MCF 10A (cell line): ENCODE measurements at regions of chr6 and their contacts with region 1.

Region 1: DNA sequence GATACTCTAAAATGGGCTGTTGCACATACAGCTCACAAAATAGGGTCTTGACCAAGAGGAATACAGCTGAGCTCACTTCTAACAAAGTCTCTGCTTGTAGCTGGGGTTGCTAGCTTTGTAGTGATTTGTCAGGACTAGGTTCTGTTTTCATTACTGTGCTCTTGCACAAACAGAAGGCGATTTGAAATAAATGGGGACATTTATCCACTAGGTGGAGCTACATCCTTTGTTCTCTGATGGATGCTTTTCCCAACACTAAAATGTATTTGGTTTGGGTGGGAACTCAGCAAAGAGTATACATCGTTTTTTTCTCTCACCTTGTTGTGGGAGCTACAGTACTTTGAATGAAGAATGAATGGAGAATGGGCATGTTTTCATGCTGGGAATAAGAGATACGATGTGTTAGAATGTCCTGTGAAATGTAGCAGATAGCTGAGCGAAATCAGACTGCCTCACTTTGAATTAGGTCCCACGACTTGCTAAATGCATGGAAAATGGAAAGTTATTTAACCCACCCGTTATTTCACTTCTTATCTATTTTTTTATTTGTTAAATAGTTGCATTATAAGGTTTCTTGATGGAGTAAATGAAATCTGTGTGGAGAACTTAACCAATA is 494.7 kb upstream of the MAP3K7 start:
- DNase-seq: peak; percentile 61
- H3K4me3 Mint-ChIP-seq: no peak overlapping the region
- H3K27ac Mint-ChIP-seq: no peak overlapping the region
- H3K4me1 Mint-ChIP-seq: peaks cover 5% of the 10 kb centered on the region
- H3K27me3 Mint-ChIP-seq: peaks cover 17% of the 10 kb centered on the region
- CTCF ChIP-seq: peak; percentile 72

Region 2: DNA sequence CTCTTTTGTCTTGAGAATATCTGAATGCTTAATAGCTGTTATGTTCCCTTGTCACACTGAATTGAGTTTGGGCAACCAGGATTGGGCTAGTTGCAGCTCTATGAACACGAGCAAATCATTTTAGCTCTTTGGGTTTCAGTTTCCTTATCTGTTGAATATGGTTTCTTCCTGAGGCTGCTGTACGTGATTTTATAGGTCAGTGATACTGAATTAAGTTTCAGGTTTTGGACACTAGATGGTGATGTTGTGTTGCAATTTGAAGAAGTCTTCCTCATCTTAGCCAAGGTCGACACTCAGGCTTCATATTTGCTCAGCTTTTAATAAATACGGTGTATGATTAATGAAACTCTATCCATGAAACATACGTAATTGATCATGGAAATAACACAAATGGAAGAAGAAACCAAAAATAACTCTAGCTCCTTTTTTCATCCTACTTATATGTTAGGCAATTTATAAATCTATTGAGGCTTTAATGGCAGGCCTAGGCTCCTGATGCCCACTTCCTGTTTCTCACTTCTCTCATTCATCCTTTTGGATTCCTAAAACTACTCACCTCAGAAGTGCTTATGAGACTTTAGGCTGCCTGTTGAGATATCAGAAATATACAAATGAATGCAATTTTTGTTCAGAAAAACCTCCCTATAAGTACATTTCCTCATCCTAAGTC is 140.6 kb before region 1 on chr6:
- CTCF ChIA-PET with region 1: interaction called, 17 read pairs
- POLR2A ChIA-PET with region 1: interaction called, 3 read pairs
- intact Hi-C with region 1: loop called (anchors 1 kb)
- DNase-seq: peak; percentile 68
- H3K4me3 Mint-ChIP-seq: peak overlapping the region; percentile 43
- H3K27ac Mint-ChIP-seq: no peak overlapping the region
- H3K4me1 Mint-ChIP-seq: peaks cover 6% of the 10 kb centered on the region
- H3K27me3 Mint-ChIP-seq: no peaks in the 10 kb centered on the region
- CTCF ChIP-seq: peak; percentile 51

Region 3: GRCh38 chr6:91029211-91029610 is 52.3 kb before region 1 on chr6:
- CTCF ChIA-PET with region 1: no interaction called
- POLR2A ChIA-PET with region 1: no interaction called
- intact Hi-C with region 1: no loop called
- DNase-seq: peak; percentile 3
- H3K4me3 Mint-ChIP-seq: no peak overlapping the region
- H3K27ac Mint-ChIP-seq: no peak overlapping the region
- H3K4me1 Mint-ChIP-seq: no peaks in the 10 kb centered on the region
- H3K27me3 Mint-ChIP-seq: peaks cover 79% of the 10 kb centered on the region
- CTCF ChIP-seq: no peak

Region 4: GRCh38 chr6:91097364-91097763 is 15.8 kb after region 1 on chr6:
- CTCF ChIA-PET with region 1: interaction called, 65 read pairs
- POLR2A ChIA-PET with region 1: no interaction called
- intact Hi-C with region 1: no loop called
- DNase-seq: no peak
- H3K4me3 Mint-ChIP-seq: no peak overlapping the region
- H3K27ac Mint-ChIP-seq: no peak overlapping the region
- H3K4me1 Mint-ChIP-seq: no peaks in the 10 kb centered on the region
- H3K27me3 Mint-ChIP-seq: peaks cover 21% of the 10 kb centered on the region
- CTCF ChIP-seq: no peak

Region 5: DNA sequence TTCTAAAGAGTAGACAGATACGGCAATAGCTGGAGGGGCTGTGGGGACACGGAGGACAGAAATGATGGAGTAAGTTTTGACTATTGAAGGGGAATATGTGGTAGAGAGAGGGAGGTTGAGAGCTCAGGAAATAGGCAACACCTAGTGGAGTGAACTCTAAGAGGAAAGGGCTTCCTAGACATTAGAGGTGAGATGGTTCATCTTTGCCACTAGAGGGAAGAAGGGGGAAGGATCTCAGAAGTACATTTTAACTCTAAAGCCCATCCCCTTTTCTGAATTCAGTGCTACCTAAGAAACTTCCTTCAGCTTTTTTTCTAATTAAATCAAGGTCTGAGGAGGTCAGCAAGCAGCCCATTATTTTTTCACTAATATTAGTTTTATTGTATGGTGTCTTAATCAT is 194.8 kb after region 1 on chr6:
- CTCF ChIA-PET with region 1: interaction called, 7 read pairs
- POLR2A ChIA-PET with region 1: no interaction called
- intact Hi-C with region 1: loop called (anchors 1 kb)
- DNase-seq: peak; percentile 32
- H3K4me3 Mint-ChIP-seq: no peak overlapping the region
- H3K27ac Mint-ChIP-seq: no peak overlapping the region
- H3K4me1 Mint-ChIP-seq: no peaks in the 10 kb centered on the region
- H3K27me3 Mint-ChIP-seq: no peaks in the 10 kb centered on the region
- CTCF ChIP-seq: peak; percentile 31

Region 6: GRCh38 chr6:92777146-92777740 is 1695.7 kb after region 1 on chr6:
- CTCF ChIA-PET with region 1: interaction called, 11 read pairs
- POLR2A ChIA-PET with region 1: no interaction called
- intact Hi-C with region 1: loop called (anchors 10 kb)
- DNase-seq: peak; percentile 49
- H3K4me3 Mint-ChIP-seq: no peak overlapping the region
- H3K27ac Mint-ChIP-seq: no peak overlapping the region
- H3K4me1 Mint-ChIP-seq: peaks cover 13% of the 10 kb centered on the region
- H3K27me3 Mint-ChIP-seq: peaks cover 18% of the 10 kb centered on the region
- CTCF ChIP-seq: peak; percentile 56